CD8-positive, alpha-beta memory T cell (primary cell): ENCODE measurements at regions of chr20 and their contacts with region 1.

Region 1: GRCh38 chr20:57680131-57680716 is 29.6 kb downstream of the PMEPA1 start:
- DNase-seq: no peak
- H3K4me3 ChIP-seq: no peak overlapping the region
- H3K4me3 Mint-ChIP-seq: no peak overlapping the region
- H3K27ac ChIP-seq: no peak overlapping the region
- H3K27ac Mint-ChIP-seq: no peak overlapping the region
- H3K4me1 ChIP-seq: peaks cover 15% of the 10 kb centered on the region
- H3K4me1 Mint-ChIP-seq: peaks cover 5 to 21% (median 13%) of the 10 kb centered on the region in 3 donors
- H3K27me3 ChIP-seq: no peaks in the 10 kb centered on the region
- H3K27me3 Mint-ChIP-seq: peaks cover 17% of the 10 kb centered on the region in 2 donors

Region 2: GRCh38 chr20:57622579-57623377 is 57.4 kb before region 1 on chr20:
- CTCF ChIA-PET with region 1: interaction called, 18 read pairs
- POLR2A ChIA-PET with region 1: no interaction called
- DNase-seq: peak; percentile 48 to 79 (median 55)
- H3K4me3 ChIP-seq: no peak overlapping the region
- H3K4me3 Mint-ChIP-seq: peak overlapping the region in 5 of 7 donors; percentile 26 to 81 (median 69)
- H3K27ac ChIP-seq: no peak overlapping the region
- H3K27ac Mint-ChIP-seq: peak overlapping the region; percentile 46 to 94 (median 88)
- H3K4me1 ChIP-seq: peaks cover 72% of the 10 kb centered on the region
- H3K4me1 Mint-ChIP-seq: peaks cover 63 to 79% (median 75%) of the 10 kb centered on the region in 3 donors
- H3K27me3 ChIP-seq: no peaks in the 10 kb centered on the region
- H3K27me3 Mint-ChIP-seq: peaks cover 0 to 3% of the 10 kb centered on the region in 2 donors